Activated B cell treated with CpG ODN at 0.5 μM for 24 hours (primary cell): ENCODE measurements at regions of chr19 and their contacts with region 1.

Region 1: DNA sequence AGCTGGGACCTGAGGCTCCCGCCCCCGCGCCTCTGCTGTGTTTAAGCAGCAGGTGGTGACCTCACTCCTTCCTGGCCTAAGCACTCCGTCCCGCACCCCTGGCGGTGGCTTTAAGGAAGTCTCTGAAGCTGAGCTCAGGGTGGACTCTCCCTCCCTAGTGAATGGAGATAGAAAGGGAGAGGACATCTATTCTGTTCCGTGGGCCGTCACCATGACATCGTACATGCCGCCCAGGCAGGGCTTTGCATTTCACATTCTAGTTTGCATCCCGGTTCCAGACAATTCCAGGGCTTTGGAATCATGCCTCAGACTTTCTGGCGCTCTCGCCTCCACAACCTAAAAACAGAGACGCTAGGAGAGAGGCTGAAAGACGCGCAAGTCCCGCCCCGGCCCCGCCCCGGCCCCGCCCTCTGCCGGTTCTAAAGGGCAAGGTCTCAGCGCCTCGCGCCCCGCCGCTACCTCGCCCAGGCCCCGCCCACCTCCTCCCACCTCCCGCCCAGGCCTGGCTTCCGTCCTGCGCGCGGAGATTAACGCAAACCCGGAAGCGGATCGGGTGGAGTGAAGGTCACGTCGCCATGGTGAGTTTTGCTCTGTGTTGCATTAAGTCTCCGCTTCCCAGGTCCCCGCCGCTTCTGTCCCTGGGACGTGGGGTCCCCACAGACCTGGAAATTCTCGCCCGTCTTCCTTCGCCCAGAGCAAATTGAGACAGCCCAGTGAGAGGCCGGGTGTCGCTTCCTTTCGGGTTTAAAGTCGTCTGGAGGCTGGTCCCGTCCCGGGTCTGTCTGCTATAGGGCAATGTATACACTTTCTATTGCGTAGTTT is at the start of gene ZNF808:
- DNase-seq: peak; percentile 79
- ATAC-seq: peak; percentile 89
- H3K4me3 Mint-ChIP-seq: peak within 1 kb of the TSS; percentile 98
- H3K27ac Mint-ChIP-seq: peak within 1 kb of the TSS; percentile 98
- H3K4me1 Mint-ChIP-seq: peaks cover 25% of the 10 kb centered on the region
- H3K27me3 Mint-ChIP-seq: no peaks in the 10 kb centered on the region
- CTCF ChIP-seq: no peak
- total RNA-seq, gene ZNF808: 31.1 and 33.7 TPM in 2 replicates

Region 2: GRCh38 chr19:52139252-52140031 is 387.9 kb before region 1 on chr19 and contains the start of gene ZNF616:
- CTCF ChIA-PET with region 1: no interaction called
- POLR2A ChIA-PET with region 1: interaction called, 3 read pairs
- intact Hi-C with region 1: loop called (anchors 5 kb)
- DNase-seq: peak; percentile 74
- ATAC-seq: peak; percentile 59
- H3K4me3 Mint-ChIP-seq: peak within 1 kb of the TSS; percentile 97
- H3K27ac Mint-ChIP-seq: peak within 1 kb of the TSS; percentile 93
- H3K4me1 Mint-ChIP-seq: peaks cover 25% of the 10 kb centered on the region
- H3K27me3 Mint-ChIP-seq: no peaks in the 10 kb centered on the region
- CTCF ChIP-seq: no peak
- total RNA-seq, gene ZNF616: 7.3 and 7.4 TPM in 2 replicates

Region 3: GRCh38 chr19:52397310-52398080 is 129.8 kb before region 1 on chr19 and contains the start of gene ZNF528:
- CTCF ChIA-PET with region 1: no interaction called
- POLR2A ChIA-PET with region 1: interaction called, 4 read pairs
- intact Hi-C with region 1: loop called (anchors 1 kb)
- DNase-seq: peak; percentile 91
- ATAC-seq: peak; percentile 99
- H3K4me3 Mint-ChIP-seq: peak within 1 kb of the TSS; percentile 90
- H3K27ac Mint-ChIP-seq: peak within 1 kb of the TSS; percentile 91
- H3K4me1 Mint-ChIP-seq: peaks cover 18% of the 10 kb centered on the region
- H3K27me3 Mint-ChIP-seq: no peaks in the 10 kb centered on the region
- CTCF ChIP-seq: no peak
- total RNA-seq, gene ZNF528: 29.8 and 40.3 TPM in 2 replicates

Region 4: DNA sequence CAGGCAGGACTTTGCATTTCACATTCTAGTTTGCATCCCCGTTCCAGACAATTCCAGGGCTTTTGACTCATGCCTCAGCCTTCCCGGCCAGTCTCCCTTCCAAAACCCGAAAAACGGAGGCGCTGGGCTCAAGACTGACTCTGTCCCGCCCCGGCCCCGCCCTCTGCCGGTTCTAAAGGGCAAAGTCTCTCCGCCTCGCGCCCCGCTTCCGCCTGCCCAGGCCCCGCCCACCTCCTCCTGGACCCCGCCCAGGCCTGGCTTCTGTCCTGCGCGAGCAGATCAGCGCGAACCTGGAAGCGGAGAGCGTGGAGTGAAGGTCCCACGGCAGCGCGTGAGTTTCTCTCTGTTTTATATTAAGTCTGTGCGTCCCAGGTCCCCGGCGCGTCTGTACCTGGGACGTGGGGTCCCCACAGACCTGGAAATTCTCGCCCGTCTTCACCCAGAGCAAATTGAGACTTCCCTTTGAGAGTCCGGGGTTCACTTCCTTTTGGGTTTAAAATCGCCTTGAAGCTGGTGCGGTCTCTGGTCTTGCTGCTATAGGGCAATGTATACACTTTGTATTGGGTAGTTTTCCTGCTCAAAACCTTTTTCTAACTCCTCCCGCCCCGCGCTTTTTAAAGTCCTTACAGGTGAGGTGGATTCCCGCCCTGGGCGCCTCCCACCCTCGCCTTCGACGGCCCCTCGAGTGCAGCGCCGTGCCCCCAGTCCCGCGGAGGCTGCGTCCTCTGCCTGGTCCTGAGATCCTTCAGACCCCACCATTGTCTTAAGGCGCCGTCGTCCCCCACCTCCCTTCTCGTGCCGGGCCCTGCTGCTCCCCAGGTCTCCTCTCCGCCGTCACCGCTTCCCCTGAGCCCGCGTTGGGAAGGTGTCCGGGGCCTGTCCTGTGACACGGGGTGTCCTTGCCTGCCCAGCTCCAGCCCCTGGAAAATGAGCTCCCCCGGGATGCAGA is 74.0 kb after region 1 on chr19:
- CTCF ChIA-PET with region 1: no interaction called
- POLR2A ChIA-PET with region 1: no interaction called
- intact Hi-C with region 1: loop called (anchors 1 kb)
- DNase-seq: peak; percentile 95
- ATAC-seq: peak; percentile 99
- H3K4me3 Mint-ChIP-seq: peak overlapping the region; percentile 93
- H3K27ac Mint-ChIP-seq: peak overlapping the region; percentile 86
- H3K4me1 Mint-ChIP-seq: peaks cover 26% of the 10 kb centered on the region
- H3K27me3 Mint-ChIP-seq: no peaks in the 10 kb centered on the region
- CTCF ChIP-seq: no peak

Region 5: GRCh38 chr19:52690369-52691214 is 163.2 kb after region 1 on chr19:
- CTCF ChIA-PET with region 1: no interaction called
- POLR2A ChIA-PET with region 1: no interaction called
- intact Hi-C with region 1: loop called (anchors 1 kb)
- DNase-seq: peak; percentile 88
- ATAC-seq: peak; percentile 97
- H3K4me3 Mint-ChIP-seq: peak overlapping the region; percentile 98
- H3K27ac Mint-ChIP-seq: peak overlapping the region; percentile 93
- H3K4me1 Mint-ChIP-seq: peaks cover 36% of the 10 kb centered on the region
- H3K27me3 Mint-ChIP-seq: no peaks in the 10 kb centered on the region
- CTCF ChIP-seq: no peak

Region 6: GRCh38 chr19:52922841-52923777 is 395.8 kb after region 1 on chr19 and contains the start of gene ZNF888:
- CTCF ChIA-PET with region 1: no interaction called
- POLR2A ChIA-PET with region 1: no interaction called
- intact Hi-C with region 1: loop called (anchors 2 kb)
- DNase-seq: peak; percentile 81
- ATAC-seq: peak; percentile 100
- H3K4me3 Mint-ChIP-seq: peak within 1 kb of the TSS; percentile 95
- H3K27ac Mint-ChIP-seq: peak within 1 kb of the TSS; percentile 88
- H3K4me1 Mint-ChIP-seq: peaks cover 29% of the 10 kb centered on the region
- H3K27me3 Mint-ChIP-seq: no peaks in the 10 kb centered on the region
- CTCF ChIP-seq: no peak
- total RNA-seq, gene ZNF888: 9.0 and 11.9 TPM in 2 replicates